ENCODE measurements at regions of chr16 and their contacts with region 1.

Region 1: GRCh38 chr16:56519459-56520250 is at the start of gene BBS2:
- DNase-seq: peak; percentile 49 to 92
- H3K4me3 ChIP-seq: peak within 1 kb of the TSS; percentile 91 to 94
- H3K27ac ChIP-seq: peak within 1 kb of the TSS; percentile 82 to 84
- H3K4me1 ChIP-seq: peaks cover 0 to 28% of the 10 kb centered on the region in 2 donors
- H3K27me3 ChIP-seq: no peaks in the 10 kb centered on the region
- CTCF ChIP-seq: no peak
- total RNA-seq, gene BBS2: 29.4 TPM

Region 2: DNA sequence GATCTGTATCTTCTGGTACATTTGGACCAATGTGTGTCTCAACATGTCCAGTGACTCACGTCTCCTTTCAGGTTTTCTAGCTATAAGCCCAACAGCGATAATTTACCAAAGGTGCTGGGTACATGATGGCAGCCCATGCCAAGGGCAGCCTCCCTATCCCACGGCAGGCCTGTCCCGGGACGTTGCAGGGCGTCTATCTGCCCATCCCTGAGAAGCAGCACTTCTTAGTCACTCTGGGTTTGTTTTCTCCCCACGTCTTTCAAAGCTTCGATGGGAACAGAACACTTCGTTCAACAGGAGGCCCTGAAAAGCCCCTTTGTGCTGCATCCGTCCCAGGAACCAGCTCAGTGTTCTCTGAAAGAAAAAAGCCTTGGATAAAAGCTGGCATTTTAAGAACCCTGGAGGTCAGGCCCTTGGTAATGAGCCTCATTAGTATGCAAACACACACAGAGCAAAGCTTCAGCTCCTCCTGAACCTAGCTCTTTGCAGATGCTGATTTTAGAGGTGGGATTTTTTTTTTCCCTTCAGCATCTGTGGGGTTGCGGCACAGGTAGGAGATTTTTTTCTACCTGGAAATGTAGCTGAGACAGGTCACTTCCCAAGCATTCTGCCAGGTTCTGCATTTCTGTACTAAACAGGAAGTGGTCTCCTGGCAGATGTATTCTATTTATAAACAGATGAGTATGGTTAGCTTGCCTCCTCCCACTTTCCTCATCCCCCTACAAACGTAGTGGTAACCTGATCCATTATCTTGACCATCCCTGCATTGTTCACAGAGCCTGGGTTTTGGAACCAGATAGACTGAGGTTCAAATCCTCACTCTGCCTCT is 27.7 kb after region 1 on chr16:
- intact Hi-C with region 1: no loop called
- DNase-seq: no peak
- H3K4me3 ChIP-seq: no peak overlapping the region
- H3K27ac ChIP-seq: no peak overlapping the region
- H3K4me1 ChIP-seq: no peaks in the 10 kb centered on the region
- H3K27me3 ChIP-seq: no peaks in the 10 kb centered on the region
- CTCF ChIP-seq: no peak

Region 3: DNA sequence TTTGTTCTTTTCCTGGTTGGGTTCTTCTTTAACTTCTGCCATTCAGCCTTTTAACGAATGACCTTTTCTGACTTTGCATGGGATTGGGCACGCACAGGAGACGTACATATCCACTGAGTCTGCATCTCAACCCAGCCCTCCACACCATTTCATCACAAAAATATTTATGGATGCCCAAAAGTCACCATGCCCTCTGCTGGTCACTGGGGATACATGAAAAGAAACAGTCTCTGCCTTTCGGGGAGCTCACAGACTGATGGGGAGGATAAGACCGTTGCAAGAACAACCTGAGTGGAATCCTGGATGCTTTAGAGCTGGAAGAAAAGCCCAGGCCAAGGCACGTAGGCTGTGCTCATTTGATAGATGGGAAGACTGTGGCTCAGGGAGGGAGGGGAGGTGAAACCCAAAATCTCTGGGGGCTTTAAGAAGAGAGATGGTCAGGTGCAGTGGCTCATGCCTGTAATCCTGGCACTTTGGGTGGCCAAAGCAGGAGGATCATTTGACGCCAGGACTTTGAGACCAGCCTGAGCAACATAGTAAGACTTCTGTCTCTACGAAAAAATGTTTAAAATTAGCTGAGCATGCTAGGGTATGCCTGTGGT is 80.8 kb after region 1 on chr16:
- intact Hi-C with region 1: loop called (anchors 2 kb)
- DNase-seq: no peak
- H3K4me3 ChIP-seq: no peak overlapping the region
- H3K27ac ChIP-seq: no peak overlapping the region
- H3K4me1 ChIP-seq: no peaks in the 10 kb centered on the region
- H3K27me3 ChIP-seq: no peaks in the 10 kb centered on the region
- CTCF ChIP-seq: peak; percentile 36 to 69 (median 50)

Region 4: DNA sequence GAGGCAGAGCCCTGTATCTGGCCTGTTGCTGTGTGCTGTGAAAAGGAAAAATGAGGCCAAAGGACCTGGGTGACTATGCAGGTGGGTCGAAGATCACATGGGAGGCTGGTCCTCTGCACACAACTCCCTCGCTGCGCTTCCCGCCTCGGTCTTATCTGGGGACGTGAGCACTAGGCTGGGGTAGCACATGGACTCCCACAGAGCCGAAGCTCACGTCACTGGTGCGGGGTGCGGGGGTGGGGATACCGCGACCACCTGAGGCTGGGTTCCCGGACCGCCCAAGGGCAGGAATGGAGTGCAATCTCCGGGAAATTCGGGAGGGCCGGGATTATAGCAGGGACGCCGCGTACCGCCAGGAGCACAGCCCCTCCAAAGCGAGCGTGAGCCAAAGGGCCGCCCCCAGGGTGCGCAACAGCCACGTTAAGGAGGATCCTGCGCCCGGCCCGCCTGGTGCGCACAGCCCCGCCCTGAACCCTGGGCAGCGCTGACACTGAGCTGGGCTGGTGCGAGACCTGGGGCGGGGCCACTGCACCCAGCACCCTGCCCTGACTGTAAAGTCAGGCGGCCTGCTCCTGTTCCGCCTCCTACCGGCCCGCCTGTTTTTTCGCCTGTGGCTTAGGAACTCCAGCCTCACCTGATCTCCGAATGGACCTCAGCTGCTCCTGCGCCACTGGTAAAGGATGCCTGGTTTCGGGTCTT is 123.6 kb after region 1 on chr16:
- intact Hi-C with region 1: loop called (anchors 5 kb)
- DNase-seq: peak; percentile 50 to 91
- H3K4me3 ChIP-seq: peak overlapping the region; percentile 48 to 62
- H3K27ac ChIP-seq: peak overlapping the region; percentile 62 to 78
- H3K4me1 ChIP-seq: peaks cover 6 to 23% of the 10 kb centered on the region in 2 donors
- H3K27me3 ChIP-seq: no peaks in the 10 kb centered on the region
- CTCF ChIP-seq: peak; percentile 37 to 71 (median 53)

Measured in ascending aorta (tissue), 2 donors.